ENCODE measurements at regions of chr2 and their contacts with region 1.

Region 1: GRCh38 chr2:197378494-197379307 is 56.1 kb downstream of the SF3B1 start:
- DNase-seq: peak; percentile 39 to 80 (median 58)
- ATAC-seq: peak; percentile 71
- H3K4me3 ChIP-seq: no peak overlapping the region
- H3K4me3 Mint-ChIP-seq: no peak overlapping the region
- H3K27ac ChIP-seq: no peak overlapping the region
- H3K27ac Mint-ChIP-seq: no peak overlapping the region
- H3K4me1 ChIP-seq: peaks cover 7% of the 10 kb centered on the region
- H3K4me1 Mint-ChIP-seq: peaks cover 21% of the 10 kb centered on the region
- H3K27me3 ChIP-seq: no peaks in the 10 kb centered on the region
- H3K27me3 Mint-ChIP-seq: no peaks in the 10 kb centered on the region
- CTCF ChIP-seq: peak; percentile 83

Region 2: DNA sequence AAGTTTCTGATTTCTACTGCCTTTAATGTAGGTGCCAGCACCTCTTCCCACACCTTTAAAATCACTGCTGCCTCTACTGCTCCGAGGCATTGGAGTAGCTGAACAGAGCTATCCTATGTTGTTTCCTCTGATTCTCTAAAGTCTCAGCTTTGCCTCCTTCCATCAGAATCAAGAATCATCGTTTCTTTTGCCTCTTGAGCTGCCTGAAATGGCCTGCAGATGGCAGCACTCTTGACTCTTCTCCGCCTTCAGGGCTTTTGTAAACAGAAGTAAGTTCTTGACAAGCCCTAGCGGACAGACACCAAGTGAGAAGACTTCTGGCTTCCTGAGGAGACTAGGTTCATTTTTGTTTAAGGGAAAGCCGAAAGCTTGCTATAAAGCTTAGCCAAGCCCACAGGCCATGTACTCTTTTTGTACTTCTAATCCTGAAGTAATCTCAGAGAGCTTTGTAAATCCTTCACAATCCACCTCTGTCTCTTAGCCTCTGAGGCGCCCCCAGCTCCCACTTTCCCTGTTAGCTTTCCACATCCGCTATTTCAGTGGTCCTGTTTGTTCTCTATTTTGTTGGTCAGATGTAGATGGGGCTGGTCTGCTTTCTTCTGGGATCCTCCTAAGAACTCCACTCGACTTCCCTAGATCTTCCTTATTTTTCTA is 627.6 kb before region 1 on chr2:
- CTCF ChIA-PET with region 1: no interaction called
- POLR2A ChIA-PET with region 1: no interaction called
- intact Hi-C with region 1: loop called in 1 of 2 experiments (anchors 5 kb)
- DNase-seq: peak; percentile 31 to 76 (median 46)
- ATAC-seq: peak; percentile 89
- H3K4me3 ChIP-seq: no peak overlapping the region
- H3K4me3 Mint-ChIP-seq: no peak overlapping the region
- H3K27ac ChIP-seq: no peak overlapping the region
- H3K27ac Mint-ChIP-seq: no peak overlapping the region
- H3K4me1 ChIP-seq: peaks cover 4% of the 10 kb centered on the region
- H3K4me1 Mint-ChIP-seq: peaks cover 6% of the 10 kb centered on the region
- H3K27me3 ChIP-seq: no peaks in the 10 kb centered on the region
- H3K27me3 Mint-ChIP-seq: no peaks in the 10 kb centered on the region
- CTCF ChIP-seq: peak; percentile 73

Region 3: DNA sequence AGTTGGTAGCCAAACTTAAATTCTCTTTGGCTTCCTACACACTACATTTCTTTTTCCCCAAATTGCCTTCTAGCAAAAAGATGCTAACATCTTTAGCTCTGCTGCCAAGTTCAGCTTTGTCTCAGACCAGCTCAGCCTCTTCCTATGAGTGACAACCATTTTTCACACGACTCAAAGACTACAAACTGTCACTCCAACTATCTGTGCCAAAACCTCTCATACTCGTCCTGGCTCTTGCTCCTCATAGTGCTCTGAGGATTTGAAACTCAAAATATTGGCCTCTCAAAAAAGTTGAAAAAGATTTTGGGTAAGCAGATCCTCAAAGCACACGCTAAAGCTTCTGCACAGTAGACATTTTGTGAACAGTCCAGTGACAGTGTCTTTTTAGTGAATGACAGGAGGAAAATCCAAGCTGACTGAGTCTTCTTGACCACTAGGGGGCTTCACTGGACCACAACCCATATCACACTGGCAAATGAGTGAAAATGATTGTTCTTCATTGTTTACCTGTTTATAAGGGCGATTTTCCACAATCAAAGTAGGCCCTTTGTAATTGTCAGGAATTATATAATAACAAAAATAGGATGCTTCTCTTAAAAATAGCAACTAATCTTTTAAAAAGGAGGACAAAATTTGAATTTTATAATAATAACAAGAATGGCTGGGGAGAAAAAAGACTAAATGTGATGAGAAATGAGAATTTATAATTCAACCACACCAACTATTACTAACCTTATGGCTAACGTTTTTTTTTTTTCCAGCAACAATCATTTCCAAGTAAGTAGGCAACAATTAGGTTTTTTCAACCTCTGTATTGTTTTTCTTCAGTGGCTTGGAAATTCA is 366.7 kb before region 1 on chr2:
- CTCF ChIA-PET with region 1: interaction called, 5 read pairs
- POLR2A ChIA-PET with region 1: no interaction called
- intact Hi-C with region 1: loop called (anchors 1 kb)
- DNase-seq: peak in 6 of 14 experiments; percentile 11 to 69 (median 33)
- ATAC-seq: peak; percentile 56
- H3K4me3 ChIP-seq: no peak overlapping the region
- H3K4me3 Mint-ChIP-seq: no peak overlapping the region
- H3K27ac ChIP-seq: no peak overlapping the region
- H3K27ac Mint-ChIP-seq: peak overlapping the region; percentile 55
- H3K4me1 ChIP-seq: peaks cover 2% of the 10 kb centered on the region
- H3K4me1 Mint-ChIP-seq: peaks cover 8% of the 10 kb centered on the region
- H3K27me3 ChIP-seq: no peaks in the 10 kb centered on the region
- H3K27me3 Mint-ChIP-seq: no peaks in the 10 kb centered on the region
- CTCF ChIP-seq: peak; percentile 75

Region 4: GRCh38 chr2:197075759-197076337 is 302.9 kb before region 1 on chr2:
- CTCF ChIA-PET with region 1: no interaction called
- POLR2A ChIA-PET with region 1: no interaction called
- intact Hi-C with region 1: loop called in 1 of 2 experiments (anchors 1 kb)
- DNase-seq: peak in 3 of 14 experiments; percentile 26 to 43 (median 37)
- ATAC-seq: no peak
- H3K4me3 ChIP-seq: no peak overlapping the region
- H3K4me3 Mint-ChIP-seq: no peak overlapping the region
- H3K27ac ChIP-seq: no peak overlapping the region
- H3K27ac Mint-ChIP-seq: peak overlapping the region; percentile 63
- H3K4me1 ChIP-seq: peaks cover 17% of the 10 kb centered on the region
- H3K4me1 Mint-ChIP-seq: peaks cover 59% of the 10 kb centered on the region
- H3K27me3 ChIP-seq: no peaks in the 10 kb centered on the region
- H3K27me3 Mint-ChIP-seq: no peaks in the 10 kb centered on the region
- CTCF ChIP-seq: peak; percentile 42

Region 5: DNA sequence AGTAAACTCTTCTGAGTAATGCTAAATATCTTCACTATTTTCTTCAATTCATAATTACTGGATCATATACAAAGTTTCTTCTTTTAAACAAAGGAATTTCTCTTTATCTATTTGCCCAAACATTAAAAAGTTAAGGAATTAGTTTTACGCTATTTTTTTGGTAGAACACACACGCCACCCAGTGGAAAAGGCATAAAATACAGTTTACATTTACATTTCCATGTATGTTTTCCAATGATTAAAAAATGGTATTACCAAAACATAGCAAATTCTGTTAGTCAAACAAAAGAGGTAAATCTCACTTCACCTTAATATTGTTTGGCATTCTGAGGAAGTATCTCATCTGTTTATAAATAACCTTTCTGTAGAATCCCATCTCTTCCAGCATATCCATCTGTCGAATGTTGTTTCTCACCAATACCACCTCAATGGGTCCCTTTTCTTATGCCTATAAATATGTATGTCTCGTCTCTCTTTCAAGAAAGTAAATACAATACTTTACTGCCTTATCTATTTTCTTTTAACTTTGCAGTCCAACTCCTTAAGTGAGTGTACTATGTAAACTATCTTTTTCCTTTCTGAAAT is 399.2 kb after region 1 on chr2:
- CTCF ChIA-PET with region 1: no interaction called
- POLR2A ChIA-PET with region 1: no interaction called
- intact Hi-C with region 1: loop called in 1 of 2 experiments (anchors 5 kb)
- DNase-seq: peak in 4 of 14 experiments; percentile 46 to 58 (median 50)
- ATAC-seq: no peak
- H3K4me3 ChIP-seq: no peak overlapping the region
- H3K4me3 Mint-ChIP-seq: no peak overlapping the region
- H3K27ac ChIP-seq: no peak overlapping the region
- H3K27ac Mint-ChIP-seq: no peak overlapping the region
- H3K4me1 ChIP-seq: no peaks in the 10 kb centered on the region
- H3K4me1 Mint-ChIP-seq: no peaks in the 10 kb centered on the region
- H3K27me3 ChIP-seq: no peaks in the 10 kb centered on the region
- H3K27me3 Mint-ChIP-seq: peaks cover 18% of the 10 kb centered on the region
- CTCF ChIP-seq: peak; percentile 89